HCT116 (cell line): ENCODE measurements at regions of chr4 and their contacts with region 1.

Region 1: GRCh38 chr4:99405433-99406115 is 29.6 kb downstream of the ADH7 start:
- DNase-seq: peak; percentile 60
- ATAC-seq: peak; percentile 88
- H3K4me3 ChIP-seq: no peak overlapping the region
- H3K27ac ChIP-seq: no peak overlapping the region
- H3K4me1 ChIP-seq: peaks cover 0 to 9% of the 10 kb centered on the region in 2 experiments; a peak in 1 of 4 replicates
- H3K27me3 ChIP-seq: no peaks in the 10 kb centered on the region
- CTCF ChIP-seq: peak; percentile 79 to 88 (median 86); a peak in 5 of 6 replicates
- POLR2A ChIP-seq: no peak
- RAD21 ChIP-seq: peak; percentile 94

Region 2: DNA sequence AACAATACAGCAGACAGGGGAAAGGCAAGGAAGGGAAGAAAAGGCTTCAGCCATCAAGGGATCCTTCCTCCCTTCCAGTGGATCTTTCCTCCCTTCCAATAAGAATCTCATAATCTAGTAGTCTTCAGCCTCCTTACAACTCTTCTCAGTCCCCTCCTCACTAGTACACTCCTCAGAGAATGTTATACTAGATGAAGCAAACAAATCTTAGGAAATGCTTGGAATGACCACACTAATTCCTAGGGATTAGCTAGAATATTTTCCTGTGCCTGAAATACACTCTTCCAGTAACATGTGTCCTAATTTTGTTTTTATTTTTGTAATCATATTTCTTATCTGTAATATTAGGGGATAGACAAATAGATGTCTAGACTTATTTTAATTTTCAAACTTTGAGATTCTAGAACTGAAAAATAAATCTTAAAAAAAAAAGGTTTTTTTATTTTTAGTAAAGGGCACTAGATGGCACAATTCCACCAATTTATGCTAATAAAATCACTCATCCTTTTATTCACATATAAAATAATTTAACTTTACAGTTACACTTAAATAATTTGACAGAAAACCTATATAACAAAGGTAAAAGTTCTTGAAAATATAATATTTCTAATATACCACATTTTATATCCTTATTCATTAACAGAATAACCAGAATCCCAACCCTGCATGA is 1255.3 kb before region 1 on chr4:
- CTCF ChIA-PET with region 1: no interaction called
- POLR2A ChIA-PET with region 1: no interaction called
- RAD21 ChIA-PET with region 1: no interaction called
- intact Hi-C with region 1: loop called (anchors 5 kb)
- DNase-seq: no peak
- ATAC-seq: no peak
- H3K4me3 ChIP-seq: no peak overlapping the region
- H3K27ac ChIP-seq: no peak overlapping the region
- H3K4me1 ChIP-seq: no peaks in the 10 kb centered on the region
- H3K27me3 ChIP-seq: no peaks in the 10 kb centered on the region
- CTCF ChIP-seq: peak in 2 of 3 experiments; percentile 36 to 46; a peak in 2 of 6 replicates
- POLR2A ChIP-seq: no peak
- RAD21 ChIP-seq: peak; percentile 64

Region 3: DNA sequence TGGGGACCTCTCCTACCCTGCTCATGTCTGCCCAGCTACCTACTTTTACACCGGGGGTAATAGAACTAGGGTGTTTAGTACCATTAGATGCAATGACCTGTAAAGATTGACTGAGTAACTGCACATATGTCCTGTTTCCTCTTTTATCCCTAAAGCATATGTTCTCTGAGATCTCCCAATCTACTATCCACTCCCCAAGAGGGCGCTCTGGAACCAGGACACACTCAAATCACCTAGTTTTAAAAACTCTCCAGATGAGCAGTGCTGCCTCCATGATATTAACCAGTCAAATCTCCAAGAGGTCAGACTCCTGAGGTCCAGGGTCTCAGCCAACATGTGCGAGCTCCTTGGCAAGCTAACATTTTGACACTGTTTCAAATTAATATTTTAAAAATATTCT is 660.2 kb before region 1 on chr4:
- CTCF ChIA-PET with region 1: no interaction called
- POLR2A ChIA-PET with region 1: no interaction called
- RAD21 ChIA-PET with region 1: no interaction called
- intact Hi-C with region 1: loop called (anchors 1 kb)
- DNase-seq: no peak
- ATAC-seq: peak; percentile 66; the same call in 1 of the 2 replicates
- H3K4me3 ChIP-seq: no peak overlapping the region
- H3K27ac ChIP-seq: no peak overlapping the region
- H3K4me1 ChIP-seq: peaks cover 13 to 24% of the 10 kb centered on the region in 2 experiments
- H3K27me3 ChIP-seq: no peaks in the 10 kb centered on the region
- CTCF ChIP-seq: peak; percentile 45 to 54 (median 50); a peak in 5 of 6 replicates
- POLR2A ChIP-seq: no peak
- RAD21 ChIP-seq: peak; percentile 65

Region 4: DNA sequence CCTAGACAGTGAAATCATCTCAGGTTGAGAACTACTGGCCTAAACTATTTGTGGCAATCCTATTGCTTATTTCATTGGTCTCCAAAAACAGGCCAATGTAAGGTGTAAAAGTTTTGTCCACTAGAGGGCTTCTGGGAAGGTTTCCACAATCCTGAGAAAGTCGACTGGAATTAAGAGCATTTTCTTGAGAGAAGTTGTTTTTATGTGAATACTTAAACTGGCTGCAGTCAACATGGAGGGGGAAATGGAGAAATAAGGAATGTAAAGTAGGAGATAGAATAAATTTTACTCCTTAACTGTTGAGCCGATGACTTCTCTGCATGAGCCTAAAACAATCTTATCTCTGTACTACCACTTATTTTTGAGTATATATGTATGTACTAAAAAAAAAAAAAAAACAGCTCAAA is 465.7 kb before region 1 on chr4:
- CTCF ChIA-PET with region 1: interaction called, 4 read pairs
- POLR2A ChIA-PET with region 1: no interaction called
- RAD21 ChIA-PET with region 1: no interaction called
- intact Hi-C with region 1: loop called (anchors 5 kb)
- DNase-seq: peak; percentile 75
- ATAC-seq: peak; percentile 84
- H3K4me3 ChIP-seq: no peak overlapping the region
- H3K27ac ChIP-seq: no peak overlapping the region
- H3K4me1 ChIP-seq: peaks cover 2 to 36% of the 10 kb centered on the region in 2 experiments; a peak in 3 of 4 replicates
- H3K27me3 ChIP-seq: no peaks in the 10 kb centered on the region
- CTCF ChIP-seq: peak; percentile 55 to 87 (median 74); a peak in 5 of 6 replicates
- POLR2A ChIP-seq: no peak
- RAD21 ChIP-seq: peak; percentile 65

Region 5: GRCh38 chr4:99117876-99118693 is 287.5 kb before region 1 on chr4:
- CTCF ChIA-PET with region 1: interaction called, 4 read pairs
- POLR2A ChIA-PET with region 1: no interaction called
- RAD21 ChIA-PET with region 1: no interaction called
- intact Hi-C with region 1: loop called (anchors 1 kb)
- DNase-seq: no peak
- ATAC-seq: no peak
- H3K4me3 ChIP-seq: no peak overlapping the region
- H3K27ac ChIP-seq: no peak overlapping the region
- H3K4me1 ChIP-seq: no peaks in the 10 kb centered on the region
- H3K27me3 ChIP-seq: no peaks in the 10 kb centered on the region
- CTCF ChIP-seq: peak; percentile 13 to 55 (median 40); a peak in 4 of 6 replicates
- POLR2A ChIP-seq: no peak
- RAD21 ChIP-seq: peak; percentile 52

Region 6: GRCh38 chr4:99462875-99463464 is 57.4 kb after region 1 on chr4:
- CTCF ChIA-PET with region 1: interaction called, 4 read pairs
- POLR2A ChIA-PET with region 1: no interaction called
- RAD21 ChIA-PET with region 1: no interaction called
- intact Hi-C with region 1: loop called (anchors 2 kb)
- DNase-seq: peak; percentile 57
- ATAC-seq: peak; percentile 99
- H3K4me3 ChIP-seq: no peak overlapping the region
- H3K27ac ChIP-seq: no peak overlapping the region
- H3K4me1 ChIP-seq: peaks cover 0 to 5% of the 10 kb centered on the region in 2 experiments; a peak in 1 of 4 replicates
- H3K27me3 ChIP-seq: no peaks in the 10 kb centered on the region
- CTCF ChIP-seq: peak; percentile 79 to 92 (median 79)
- POLR2A ChIP-seq: no peak
- RAD21 ChIP-seq: peak; percentile 94